ENCODE measurements at regions of chr6 and their contacts with region 1.

Region 1: DNA sequence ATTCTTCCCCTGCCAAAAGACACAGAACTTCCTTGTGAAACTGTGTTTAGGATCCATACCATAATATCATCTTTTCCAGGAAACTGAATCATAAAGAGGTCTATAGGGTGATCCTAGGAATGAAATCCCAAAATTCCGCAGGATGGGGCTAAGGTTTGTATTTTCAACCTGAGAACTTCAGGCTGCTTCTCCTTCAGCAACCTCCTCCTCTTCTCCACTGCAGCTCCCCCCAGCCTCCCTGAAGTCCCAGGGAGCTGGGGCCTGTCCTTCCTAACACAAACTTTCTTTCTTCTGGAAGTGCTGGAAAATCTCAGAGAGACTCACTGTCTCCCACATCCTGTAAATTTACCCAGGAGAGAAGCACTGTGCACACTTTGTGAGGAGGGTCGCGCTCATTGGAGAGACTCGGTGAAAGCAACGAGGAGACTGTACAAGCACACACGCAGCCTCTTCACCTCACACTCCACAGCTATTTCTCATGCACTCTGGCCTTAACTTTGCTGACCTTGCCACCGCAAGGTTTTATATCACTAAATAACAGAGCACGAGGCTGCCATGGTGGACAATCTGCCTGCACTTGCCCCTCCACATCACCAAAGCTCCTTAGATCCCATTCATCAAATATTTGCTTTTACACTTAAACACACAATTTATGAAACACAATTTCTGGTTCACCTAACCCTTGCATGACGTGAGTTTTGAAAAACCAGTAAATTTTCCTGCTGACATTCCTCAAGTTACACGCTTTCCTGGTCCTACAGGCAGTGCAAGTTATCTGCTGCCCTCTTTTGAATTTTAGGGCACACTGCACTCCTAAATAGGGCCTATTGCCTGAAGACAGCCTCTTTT is 14.3 kb downstream of the ID4 start:
- DNase-seq: peak; percentile 45 to 54
- H3K4me3 ChIP-seq: no peak overlapping the region
- H3K4me3 Mint-ChIP-seq: no peak overlapping the region
- H3K27ac Mint-ChIP-seq: no peak overlapping the region
- H3K4me1 ChIP-seq: no peaks in the 10 kb centered on the region
- H3K4me1 Mint-ChIP-seq: no peaks in the 10 kb centered on the region
- H3K27me3 ChIP-seq: no peaks in the 10 kb centered on the region
- H3K27me3 Mint-ChIP-seq: peaks cover 9% of the 10 kb centered on the region
- CTCF ChIP-seq: peak; percentile 70 to 75

Region 2: DNA sequence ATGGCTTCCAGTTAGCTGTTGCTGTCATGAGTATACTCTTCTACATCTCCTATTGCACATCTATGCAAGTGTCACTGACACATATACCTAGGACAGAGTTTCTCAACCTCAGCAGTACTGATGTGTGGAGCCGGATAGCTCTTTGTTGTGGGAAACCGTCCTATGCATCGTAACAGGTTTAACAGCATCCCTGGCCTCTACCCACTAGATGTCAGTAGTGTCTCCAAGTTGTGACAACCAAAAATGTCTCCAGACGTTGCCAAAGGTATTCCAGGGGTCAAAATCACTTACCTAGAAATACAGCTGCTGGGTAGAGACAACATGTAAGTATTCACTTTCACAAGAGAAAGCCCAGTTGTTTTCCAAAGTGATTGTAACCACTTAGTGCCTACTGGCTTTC is 826.7 kb before region 1 on chr6:
- CTCF ChIA-PET with region 1: no interaction called
- POLR2A ChIA-PET with region 1: no interaction called
- intact Hi-C with region 1: loop called (anchors 10 kb)
- DNase-seq: peak; percentile 36 to 53
- H3K4me3 ChIP-seq: no peak overlapping the region
- H3K4me3 Mint-ChIP-seq: no peak overlapping the region
- H3K27ac Mint-ChIP-seq: no peak overlapping the region
- H3K4me1 ChIP-seq: no peaks in the 10 kb centered on the region
- H3K4me1 Mint-ChIP-seq: peaks cover 5% of the 10 kb centered on the region
- H3K27me3 ChIP-seq: no peaks in the 10 kb centered on the region
- H3K27me3 Mint-ChIP-seq: peaks cover 4% of the 10 kb centered on the region
- CTCF ChIP-seq: peak; percentile 35 to 53

Region 3: GRCh38 chr6:19549113-19549512 is 302.4 kb before region 1 on chr6:
- CTCF ChIA-PET with region 1: no interaction called
- POLR2A ChIA-PET with region 1: no interaction called
- intact Hi-C with region 1: loop called (anchors 5 kb)
- DNase-seq: no peak
- H3K4me3 ChIP-seq: no peak overlapping the region
- H3K4me3 Mint-ChIP-seq: no peak overlapping the region
- H3K27ac Mint-ChIP-seq: no peak overlapping the region
- H3K4me1 ChIP-seq: no peaks in the 10 kb centered on the region
- H3K4me1 Mint-ChIP-seq: no peaks in the 10 kb centered on the region
- H3K27me3 ChIP-seq: no peaks in the 10 kb centered on the region
- H3K27me3 Mint-ChIP-seq: no peaks in the 10 kb centered on the region
- CTCF ChIP-seq: no peak

Region 4: DNA sequence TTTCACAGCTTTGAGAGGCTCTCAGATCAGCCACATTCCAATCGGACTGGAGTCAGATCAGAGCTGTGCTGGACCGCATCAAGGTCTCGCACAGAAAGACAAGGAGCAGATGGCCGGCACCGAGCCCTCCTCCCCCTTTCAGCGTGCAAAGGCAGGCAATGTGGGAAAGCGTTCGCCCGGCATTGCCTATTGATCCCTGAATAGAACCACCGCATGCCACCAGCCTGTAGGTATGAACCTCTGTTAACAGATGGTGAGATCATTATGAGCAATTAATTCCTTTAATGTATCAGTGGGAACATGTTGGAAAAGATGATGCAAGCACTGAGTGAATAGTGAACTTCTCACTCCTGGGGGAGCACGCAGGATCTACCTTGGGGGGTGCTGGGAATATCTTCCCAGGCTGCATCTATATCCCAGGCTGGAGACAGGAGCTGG is 131.8 kb before region 1 on chr6:
- CTCF ChIA-PET with region 1: no interaction called
- POLR2A ChIA-PET with region 1: no interaction called
- intact Hi-C with region 1: loop called (anchors 10 kb)
- DNase-seq: no peak
- H3K4me3 ChIP-seq: no peak overlapping the region
- H3K4me3 Mint-ChIP-seq: no peak overlapping the region
- H3K27ac Mint-ChIP-seq: no peak overlapping the region
- H3K4me1 ChIP-seq: no peaks in the 10 kb centered on the region
- H3K4me1 Mint-ChIP-seq: no peaks in the 10 kb centered on the region
- H3K27me3 ChIP-seq: no peaks in the 10 kb centered on the region
- H3K27me3 Mint-ChIP-seq: peaks cover 13% of the 10 kb centered on the region
- CTCF ChIP-seq: no peak

Region 5: DNA sequence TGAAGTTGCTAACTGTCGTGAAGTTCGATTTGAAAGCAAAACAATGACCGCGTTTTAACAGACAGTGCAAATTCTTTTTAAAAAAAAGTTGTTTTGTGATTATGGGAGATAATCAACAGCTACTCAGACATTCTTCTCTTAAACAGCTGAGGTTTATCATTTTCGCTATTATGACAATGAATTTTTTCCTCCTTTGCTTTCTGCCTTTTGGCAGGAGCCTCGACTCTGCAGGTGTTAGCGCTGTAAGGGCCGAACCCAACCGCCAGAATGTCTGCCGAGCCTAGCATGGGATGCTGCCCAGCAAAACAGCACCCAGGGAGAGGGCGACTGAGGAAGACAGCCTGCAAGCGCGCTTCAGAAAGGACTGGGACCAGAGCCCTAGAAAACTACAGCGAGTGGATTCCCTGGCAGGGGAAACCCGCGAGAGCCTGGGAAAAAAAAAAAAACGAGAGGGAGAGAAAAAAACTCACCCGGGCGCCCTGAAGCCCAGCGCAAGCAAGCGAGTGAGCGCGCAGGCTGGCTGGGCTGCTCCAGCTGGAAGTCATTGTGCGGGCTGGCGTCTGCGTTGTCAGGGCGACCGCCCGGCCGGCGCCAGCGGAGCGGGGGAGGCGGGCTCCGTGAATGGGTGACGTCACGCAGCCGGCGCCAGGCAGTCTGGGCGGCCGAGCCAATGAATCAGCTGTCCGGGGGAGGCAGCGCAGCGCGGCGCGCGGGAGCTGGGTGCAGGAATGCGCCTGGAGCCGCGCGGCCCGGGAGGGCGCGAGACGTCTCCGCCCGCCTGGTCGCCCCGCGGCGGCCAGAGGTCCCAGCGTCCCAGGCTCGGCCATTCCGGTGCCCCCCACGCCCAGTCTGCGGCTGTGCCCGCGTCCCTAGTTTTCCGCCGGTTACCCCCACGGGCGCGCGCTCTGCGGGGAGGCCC is 47.0 kb before region 1 on chr6:
- CTCF ChIA-PET with region 1: no interaction called
- POLR2A ChIA-PET with region 1: no interaction called
- intact Hi-C with region 1: loop called (anchors 2 kb)
- DNase-seq: peak; percentile 91 to 93
- H3K4me3 ChIP-seq: peak overlapping the region; percentile 47
- H3K4me3 Mint-ChIP-seq: peak overlapping the region; percentile 78
- H3K27ac Mint-ChIP-seq: peak overlapping the region; percentile 75
- H3K4me1 ChIP-seq: no peaks in the 10 kb centered on the region
- H3K4me1 Mint-ChIP-seq: no peaks in the 10 kb centered on the region
- H3K27me3 ChIP-seq: no peaks in the 10 kb centered on the region
- H3K27me3 Mint-ChIP-seq: peaks cover 10% of the 10 kb centered on the region
- CTCF ChIP-seq: no peak

Region 6: DNA sequence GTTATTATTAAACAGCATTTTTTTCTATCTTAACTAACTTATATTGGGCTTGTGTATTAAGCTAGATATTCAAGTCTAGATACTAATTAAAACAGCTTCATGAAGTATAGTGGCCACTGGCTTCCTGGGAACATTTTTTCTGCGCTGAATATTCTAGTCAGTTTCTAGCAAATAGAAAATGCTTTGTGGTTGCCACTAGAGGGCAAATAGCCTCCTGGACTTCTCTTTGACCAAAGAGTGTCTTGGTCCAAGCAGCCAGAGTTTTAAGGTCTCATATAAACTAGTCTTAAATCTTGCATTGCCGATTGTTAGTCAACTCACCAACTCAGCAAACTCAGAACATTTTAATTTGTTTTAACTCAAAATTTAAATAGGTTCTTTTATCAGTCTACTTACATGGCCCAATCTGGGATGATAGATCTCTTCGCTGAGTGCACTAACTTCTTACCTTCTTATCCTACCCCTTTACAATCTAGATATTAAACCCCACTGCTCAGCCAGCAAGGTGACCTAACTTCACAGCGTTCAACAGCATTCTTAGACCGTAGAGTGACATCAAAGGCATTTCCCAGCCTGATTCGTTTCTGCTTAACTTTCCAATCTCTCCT is 38.8 kb before region 1 on chr6:
- CTCF ChIA-PET with region 1: no interaction called
- POLR2A ChIA-PET with region 1: no interaction called
- intact Hi-C with region 1: loop called (anchors 1 kb)
- DNase-seq: peak in 1 of 2 experiments; percentile 8
- H3K4me3 ChIP-seq: no peak overlapping the region
- H3K4me3 Mint-ChIP-seq: no peak overlapping the region
- H3K27ac Mint-ChIP-seq: no peak overlapping the region
- H3K4me1 ChIP-seq: peaks cover 7% of the 10 kb centered on the region; the same call in 1 of the 2 replicates
- H3K4me1 Mint-ChIP-seq: peaks cover 8% of the 10 kb centered on the region
- H3K27me3 ChIP-seq: no peaks in the 10 kb centered on the region
- H3K27me3 Mint-ChIP-seq: peaks cover 18% of the 10 kb centered on the region
- CTCF ChIP-seq: peak; percentile 42 to 69